ENCODE measurements at regions of chr1 and their contacts with region 1.

Region 1: DNA sequence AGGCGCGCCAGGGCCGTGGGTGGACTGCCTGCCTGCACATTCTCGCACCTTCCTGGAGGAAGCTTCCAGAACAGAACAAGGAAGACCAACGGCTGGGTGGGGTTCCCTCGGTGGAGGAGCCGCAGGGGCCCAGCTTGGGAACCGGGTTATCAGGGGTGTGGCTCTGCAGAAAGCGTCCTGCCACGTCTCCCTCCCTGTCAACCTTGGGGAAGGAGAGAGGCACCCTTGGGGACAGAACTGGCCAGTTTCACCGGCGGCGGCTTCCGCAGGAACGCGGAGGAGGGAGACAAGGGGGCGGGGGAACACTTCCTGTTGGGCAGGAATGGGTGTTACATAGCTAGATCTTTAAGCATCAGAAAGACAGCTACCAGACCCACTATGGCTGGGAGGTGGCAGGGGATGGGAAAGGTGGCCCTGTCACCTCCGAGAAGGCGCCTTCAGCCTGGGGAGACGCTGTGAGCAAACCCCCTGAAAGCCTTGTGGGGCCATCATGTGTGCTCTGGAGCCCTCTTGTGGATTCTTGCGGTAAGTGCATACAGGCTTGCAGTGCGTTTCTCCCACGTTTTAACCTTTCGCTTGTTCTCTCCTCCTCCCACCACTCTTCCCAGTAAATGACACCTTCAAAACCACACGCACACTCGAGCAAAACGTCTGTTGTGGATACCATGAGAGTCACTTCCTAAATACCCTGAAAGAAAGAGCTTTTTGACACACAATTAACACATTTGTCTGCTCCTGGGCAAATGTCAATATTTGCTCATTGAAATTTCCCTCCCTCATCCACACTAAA is 3.8 kb upstream of the PLEKHA6 start:
- DNase-seq: no peak
- H3K4me3 ChIP-seq: peak overlapping the region; percentile 33 to 68 (median 46)
- H3K27ac ChIP-seq: peak overlapping the region; percentile 29 to 74 (median 47)
- H3K4me1 ChIP-seq: peaks cover 13 to 44% (median 21%) of the 10 kb centered on the region in 3 donors
- H3K27me3 ChIP-seq: peaks cover 0 to 18% (median 0%) of the 10 kb centered on the region in 4 donors
- CTCF ChIP-seq: peak; percentile 96 to 98 (median 97)
- POLR2A ChIP-seq: no peak

Region 2: DNA sequence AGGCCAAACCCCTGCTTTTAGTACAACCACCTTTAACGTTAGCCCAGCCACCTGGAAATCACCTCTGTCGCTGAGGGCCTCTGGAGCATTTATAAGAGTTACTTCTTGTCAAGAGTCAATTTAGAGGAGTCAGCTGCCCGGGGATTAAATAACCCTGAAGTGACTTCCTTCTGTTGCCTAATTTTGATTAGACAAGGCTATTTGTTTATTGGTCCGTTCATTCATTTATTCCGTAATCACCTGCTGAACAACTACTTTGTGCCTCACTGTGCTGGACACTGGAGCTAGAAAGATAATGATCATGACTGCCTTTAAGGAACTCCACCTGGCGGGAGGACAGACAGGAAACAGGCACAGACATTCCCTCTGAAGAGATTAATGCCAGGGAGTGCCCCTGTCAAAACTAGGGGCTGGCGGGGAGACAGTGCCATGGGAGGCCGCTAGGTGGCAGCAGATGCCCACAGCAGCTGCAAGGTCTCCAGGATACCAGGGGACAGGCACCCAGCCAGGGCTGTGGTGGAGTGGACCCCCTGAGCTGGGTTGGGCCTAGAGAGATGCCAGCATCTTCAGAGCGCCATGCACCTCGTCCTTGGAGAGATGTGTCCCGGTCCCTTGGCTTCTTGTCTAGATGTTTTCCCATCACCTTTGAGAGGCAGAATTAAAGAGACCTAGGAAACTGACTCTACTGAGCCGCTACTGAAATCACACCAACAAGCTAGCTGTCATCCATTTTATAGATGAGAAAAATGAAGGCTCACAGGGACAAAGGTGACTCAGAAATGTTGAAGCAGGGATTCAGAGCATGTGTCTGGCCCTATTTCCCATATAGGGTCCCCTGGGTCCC is 201.1 kb before region 1 on chr1:
- intact Hi-C with region 1: loop called (anchors 5 kb)
- DNase-seq: no peak
- H3K4me3 ChIP-seq: no peak overlapping the region
- H3K27ac ChIP-seq: no peak overlapping the region
- H3K4me1 ChIP-seq: peaks cover 0 to 23% (median 3%) of the 10 kb centered on the region in 3 donors
- H3K27me3 ChIP-seq: peaks cover 0 to 29% (median 0%) of the 10 kb centered on the region in 4 donors
- CTCF ChIP-seq: peak; percentile 94 to 99 (median 98)
- POLR2A ChIP-seq: no peak

Region 3: DNA sequence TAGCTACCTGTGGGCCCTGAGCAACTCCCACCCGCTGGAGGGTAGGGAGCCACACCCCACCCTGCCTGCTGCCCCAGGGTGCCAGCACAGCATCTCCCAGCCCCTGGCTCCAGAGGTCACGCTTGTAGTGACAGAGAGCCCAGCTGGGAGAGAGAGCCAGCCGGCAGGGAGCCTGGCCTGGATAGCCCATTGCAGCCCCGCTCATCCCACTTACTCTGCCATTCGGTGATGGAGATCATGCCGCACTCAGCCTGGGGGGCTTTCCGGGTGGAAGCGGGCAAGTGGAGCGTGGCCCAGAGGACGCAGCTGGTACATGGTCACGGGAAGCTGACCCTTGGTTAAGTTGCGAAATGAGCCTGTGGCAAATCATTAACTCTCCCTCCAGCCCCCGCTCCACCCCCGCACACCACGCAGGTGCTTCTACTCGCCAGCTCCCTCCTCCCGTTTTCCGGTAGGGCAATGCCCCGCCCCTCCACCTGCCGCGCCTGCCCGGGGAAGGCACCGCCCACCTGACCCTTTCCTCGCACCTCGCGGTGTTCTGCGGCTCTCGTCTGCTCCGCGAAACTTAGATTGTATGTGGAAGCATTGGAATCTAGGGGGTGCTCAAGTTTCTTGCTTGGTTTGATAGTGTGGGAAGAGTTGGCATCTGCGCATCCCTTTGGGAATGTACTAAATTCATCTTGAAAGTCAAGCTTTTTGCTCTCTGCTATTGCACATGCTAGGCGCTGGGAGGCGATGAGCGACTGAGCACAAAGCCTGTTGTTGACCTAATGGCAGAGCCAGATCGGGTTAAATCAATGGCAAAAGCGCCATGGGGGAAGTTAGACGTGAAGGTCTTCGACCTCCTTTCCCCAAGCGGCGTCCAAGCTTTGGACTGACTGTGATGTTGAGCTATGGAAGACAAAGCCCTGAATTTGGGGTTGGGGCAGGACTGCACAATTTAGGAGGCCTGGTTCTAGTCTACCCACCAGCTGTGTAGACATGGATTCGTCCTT is 149.6 kb before region 1 on chr1 and contains the start of gene GOLT1A:
- intact Hi-C with region 1: loop called (anchors 5 kb)
- DNase-seq: no peak
- H3K4me3 ChIP-seq: peak within 1 kb of the TSS in 3 of 4 donors; percentile 23 to 47 (median 30)
- H3K27ac ChIP-seq: no peak within 1 kb of the TSS
- H3K4me1 ChIP-seq: peaks cover 9 to 12% (median 10%) of the 10 kb centered on the region in 3 donors
- H3K27me3 ChIP-seq: peaks cover 0 to 20% (median 0%) of the 10 kb centered on the region in 4 donors
- CTCF ChIP-seq: peak in 5 of 6 experiments; percentile 55 to 78 (median 66)
- POLR2A ChIP-seq: no peak
- total RNA-seq, gene GOLT1A: 0.38 TPM in 1 of 4 donors, not detected in the others

Region 4: DNA sequence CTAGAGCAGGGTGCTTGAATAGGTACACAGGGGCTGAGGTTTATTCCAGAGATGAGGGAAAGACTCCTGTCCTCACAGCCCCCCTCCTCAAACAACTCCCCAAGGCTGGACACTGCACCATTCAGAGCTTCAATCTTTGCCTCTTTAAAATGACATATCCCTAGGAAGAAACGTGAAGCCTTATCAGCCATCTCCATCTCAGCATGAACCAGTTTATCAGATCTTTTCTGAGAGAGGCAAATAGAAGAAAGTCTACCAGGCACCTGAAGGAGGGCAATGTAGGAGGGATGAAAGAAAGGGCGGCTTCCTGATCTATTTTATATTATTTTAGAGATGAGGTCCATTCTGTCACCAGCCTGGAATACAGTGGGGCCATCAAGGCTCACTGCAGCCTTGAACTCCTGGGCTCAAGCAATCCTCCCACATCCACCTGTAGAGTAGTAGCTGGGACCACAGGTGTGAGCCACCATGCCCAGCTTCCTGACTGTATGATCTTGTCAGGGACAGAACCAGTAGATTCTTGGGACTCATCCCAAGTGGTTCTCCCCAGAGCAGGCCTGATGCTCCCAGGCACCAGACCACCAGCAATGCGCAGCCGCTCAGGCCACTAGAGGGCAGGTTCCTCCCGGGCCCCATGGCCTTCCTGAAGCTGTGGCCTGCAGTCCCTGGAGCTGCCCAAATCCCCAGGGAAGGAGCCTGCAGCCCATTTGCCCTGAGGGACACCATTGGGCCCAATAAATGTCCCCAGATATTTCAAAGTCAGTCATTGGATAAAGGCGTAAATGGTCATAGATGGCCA is 105.4 kb before region 1 on chr1:
- intact Hi-C with region 1: loop called (anchors 5 kb)
- DNase-seq: no peak
- H3K4me3 ChIP-seq: no peak overlapping the region
- H3K27ac ChIP-seq: no peak overlapping the region
- H3K4me1 ChIP-seq: peaks cover 0 to 3% (median 0%) of the 10 kb centered on the region in 3 donors
- H3K27me3 ChIP-seq: no peaks in the 10 kb centered on the region
- CTCF ChIP-seq: peak in 5 of 6 experiments; percentile 62 to 73 (median 64)
- POLR2A ChIP-seq: no peak

Measured in esophagus squamous epithelium (tissue), 5 donors.